Activated CD4-positive, alpha-beta memory T cell treated with anti-CD3 and anti-CD28 coated beads, Interleukin-2, amount 10 ng/mL, durations not matched to agents 7 days and 5 days (primary cell): ENCODE measurements at regions of chr16 and their contacts with region 1.

Region 1: GRCh38 chr16:21646721-21647561 is 5.5 kb downstream of the IGSF6 start:
- DNase-seq: peak; percentile 89
- H3K4me3 Mint-ChIP-seq: peak overlapping the region; percentile 36
- H3K27ac Mint-ChIP-seq: peak overlapping the region; percentile 91
- H3K4me1 Mint-ChIP-seq: peaks cover 47% of the 10 kb centered on the region
- H3K27me3 Mint-ChIP-seq: no peaks in the 10 kb centered on the region

Region 2: DNA sequence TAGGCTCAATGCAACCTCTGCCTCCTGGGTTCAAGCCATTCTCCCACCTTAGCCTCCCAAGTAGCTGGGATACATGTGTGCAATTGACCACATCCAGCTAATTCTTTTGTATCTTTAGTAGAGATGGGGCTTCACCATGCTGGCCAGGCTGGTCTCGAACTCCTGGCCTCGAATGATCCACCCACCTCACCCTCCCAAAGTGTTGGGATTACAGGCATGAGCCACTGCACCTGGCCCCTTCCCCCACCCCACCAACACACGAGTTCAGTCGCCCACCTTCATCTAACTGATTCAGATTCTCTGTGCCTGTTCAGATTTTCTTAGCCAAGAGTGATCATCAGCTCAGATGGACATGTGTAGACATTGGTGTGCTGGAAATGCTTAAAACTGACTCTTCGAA is 72.6 kb before region 1 on chr16:
- CTCF ChIA-PET with region 1: no interaction called
- POLR2A ChIA-PET with region 1: no interaction called
- DNase-seq: no peak
- H3K4me3 Mint-ChIP-seq: no peak overlapping the region
- H3K27ac Mint-ChIP-seq: no peak overlapping the region
- H3K4me1 Mint-ChIP-seq: no peaks in the 10 kb centered on the region
- H3K27me3 Mint-ChIP-seq: peaks cover 17% of the 10 kb centered on the region

Region 3: GRCh38 chr16:21584817-21585216 is 62.1 kb before region 1 on chr16:
- CTCF ChIA-PET with region 1: interaction called, 48 read pairs
- POLR2A ChIA-PET with region 1: interaction called, 3 read pairs
- DNase-seq: no peak
- H3K4me3 Mint-ChIP-seq: no peak overlapping the region
- H3K27ac Mint-ChIP-seq: no peak overlapping the region
- H3K4me1 Mint-ChIP-seq: peaks cover 2% of the 10 kb centered on the region
- H3K27me3 Mint-ChIP-seq: no peaks in the 10 kb centered on the region

Region 4: DNA sequence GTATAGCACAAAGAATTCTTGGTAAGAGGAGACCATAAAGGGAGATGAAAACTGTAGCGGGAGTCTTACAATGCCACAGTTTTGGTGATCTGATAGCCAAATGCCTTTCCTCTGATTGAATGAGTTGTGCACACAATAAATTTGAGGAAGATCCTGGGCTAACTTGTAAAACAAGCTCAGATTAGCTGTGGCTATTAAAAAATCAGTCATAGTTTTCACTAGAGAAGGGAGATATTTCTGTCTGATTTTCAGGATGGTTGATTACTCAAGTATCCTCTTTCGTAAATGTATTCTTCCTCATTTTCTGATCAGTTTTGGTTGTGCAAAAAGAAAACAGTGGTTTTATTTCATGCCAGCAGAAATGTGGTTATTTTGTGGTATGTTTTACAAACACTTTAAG is 56.7 kb before region 1 on chr16:
- CTCF ChIA-PET with region 1: interaction called, 17 read pairs
- POLR2A ChIA-PET with region 1: interaction called, 3 read pairs
- DNase-seq: no peak
- H3K4me3 Mint-ChIP-seq: no peak overlapping the region
- H3K27ac Mint-ChIP-seq: no peak overlapping the region
- H3K4me1 Mint-ChIP-seq: no peaks in the 10 kb centered on the region
- H3K27me3 Mint-ChIP-seq: no peaks in the 10 kb centered on the region

Region 5: DNA sequence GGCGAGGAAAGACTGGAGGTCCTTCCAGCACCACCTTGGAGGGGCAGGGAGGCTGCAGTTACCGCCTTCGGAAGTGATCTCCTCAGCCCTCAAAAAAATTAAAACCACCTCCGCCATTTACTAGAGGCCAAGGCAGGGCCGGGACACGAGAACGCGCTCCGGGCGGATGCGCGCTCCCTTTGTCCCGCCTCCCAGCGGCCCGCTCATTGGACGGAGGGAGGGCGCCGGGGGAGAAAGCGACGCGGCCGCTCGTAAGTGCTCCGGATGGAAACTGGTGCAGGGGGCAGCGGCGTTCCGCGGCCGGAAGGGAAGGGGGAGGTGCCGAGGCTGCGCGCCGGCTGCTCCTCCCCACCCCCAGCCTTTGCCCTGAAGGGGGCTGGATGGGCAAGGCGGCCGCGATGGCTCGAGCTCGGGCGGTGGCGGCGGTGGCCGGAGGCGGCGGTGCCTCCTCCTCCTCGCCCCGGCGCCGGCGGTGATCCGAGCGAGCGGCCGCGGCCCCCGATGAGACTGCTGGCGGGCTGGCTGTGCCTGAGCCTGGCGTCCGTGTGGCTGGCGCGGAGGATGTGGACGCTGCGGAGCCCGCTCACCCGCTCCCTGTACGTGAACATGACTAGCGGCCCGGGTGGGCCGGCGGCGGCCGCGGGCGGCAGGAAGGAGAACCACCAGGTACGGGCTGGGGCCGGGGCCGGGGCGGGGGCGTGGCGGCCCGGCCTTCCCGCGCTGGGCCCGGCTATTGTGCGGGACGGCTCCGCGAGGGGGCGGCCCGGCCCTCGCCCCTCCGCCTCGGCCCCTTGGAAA is 47.5 kb before region 1 on chr16 and contains the start of gene METTL9:
- CTCF ChIA-PET with region 1: interaction called, 3 read pairs
- POLR2A ChIA-PET with region 1: interaction called, 25 read pairs
- DNase-seq: peak; percentile 96
- H3K4me3 Mint-ChIP-seq: peak within 1 kb of the TSS; percentile 88
- H3K27ac Mint-ChIP-seq: peak within 1 kb of the TSS; percentile 85
- H3K4me1 Mint-ChIP-seq: peaks cover 53% of the 10 kb centered on the region
- H3K27me3 Mint-ChIP-seq: no peaks in the 10 kb centered on the region
- total RNA-seq, gene METTL9: 84.2 to 86.1 TPM

Region 6: GRCh38 chr16:21611546-21612384 is 35.2 kb before region 1 on chr16:
- CTCF ChIA-PET with region 1: interaction called, 8 read pairs
- POLR2A ChIA-PET with region 1: interaction called, 27 read pairs
- DNase-seq: peak; percentile 20
- H3K4me3 Mint-ChIP-seq: no peak overlapping the region
- H3K27ac Mint-ChIP-seq: peak overlapping the region; percentile 73
- H3K4me1 Mint-ChIP-seq: peaks cover 83% of the 10 kb centered on the region
- H3K27me3 Mint-ChIP-seq: no peaks in the 10 kb centered on the region

Region 7: GRCh38 chr16:21628772-21629171 is 18.2 kb before region 1 on chr16:
- CTCF ChIA-PET with region 1: no interaction called
- POLR2A ChIA-PET with region 1: no interaction called
- DNase-seq: no peak
- H3K4me3 Mint-ChIP-seq: no peak overlapping the region
- H3K27ac Mint-ChIP-seq: no peak overlapping the region
- H3K4me1 Mint-ChIP-seq: peaks cover 34% of the 10 kb centered on the region
- H3K27me3 Mint-ChIP-seq: no peaks in the 10 kb centered on the region

Region 8: GRCh38 chr16:21656795-21657768 is 10.1 kb after region 1 on chr16:
- CTCF ChIA-PET with region 1: interaction called, 40 read pairs
- POLR2A ChIA-PET with region 1: interaction called, 13 read pairs
- DNase-seq: peak; percentile 34
- H3K4me3 Mint-ChIP-seq: no peak overlapping the region
- H3K27ac Mint-ChIP-seq: no peak overlapping the region
- H3K4me1 Mint-ChIP-seq: peaks cover 45% of the 10 kb centered on the region
- H3K27me3 Mint-ChIP-seq: no peaks in the 10 kb centered on the region